ENCODE measurements at regions of chr6 and their contacts with region 1.

Region 1: DNA sequence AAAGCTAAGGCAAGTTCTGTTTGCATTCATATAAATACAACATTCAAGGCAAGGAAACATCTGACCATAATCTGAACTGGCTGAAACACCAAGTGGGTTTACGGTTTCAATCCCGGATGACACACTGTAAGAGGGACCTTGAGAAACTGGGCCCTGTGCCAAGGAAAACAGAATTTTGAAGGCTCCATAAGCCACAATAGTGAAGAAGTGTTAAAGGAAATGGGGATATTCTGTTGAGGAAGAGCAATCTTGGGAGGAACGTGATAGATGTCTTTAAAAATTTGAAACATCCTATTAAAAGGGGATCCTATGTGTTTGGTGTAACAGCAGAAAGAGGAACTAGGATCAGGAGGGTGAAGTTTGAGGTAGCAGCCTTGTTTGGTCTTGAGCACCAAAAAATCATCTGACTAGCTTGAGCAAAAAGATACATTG is 82.4 kb upstream of the TAB2 start:
- DNase-seq: no peak
- ATAC-seq: peak; percentile 81
- H3K4me3 Mint-ChIP-seq: peak overlapping the region; percentile 65
- H3K27ac Mint-ChIP-seq: peak overlapping the region; percentile 81
- H3K4me1 Mint-ChIP-seq: peaks cover 58% of the 10 kb centered on the region
- H3K27me3 Mint-ChIP-seq: no peaks in the 10 kb centered on the region
- CTCF ChIP-seq: no peak

Region 2: DNA sequence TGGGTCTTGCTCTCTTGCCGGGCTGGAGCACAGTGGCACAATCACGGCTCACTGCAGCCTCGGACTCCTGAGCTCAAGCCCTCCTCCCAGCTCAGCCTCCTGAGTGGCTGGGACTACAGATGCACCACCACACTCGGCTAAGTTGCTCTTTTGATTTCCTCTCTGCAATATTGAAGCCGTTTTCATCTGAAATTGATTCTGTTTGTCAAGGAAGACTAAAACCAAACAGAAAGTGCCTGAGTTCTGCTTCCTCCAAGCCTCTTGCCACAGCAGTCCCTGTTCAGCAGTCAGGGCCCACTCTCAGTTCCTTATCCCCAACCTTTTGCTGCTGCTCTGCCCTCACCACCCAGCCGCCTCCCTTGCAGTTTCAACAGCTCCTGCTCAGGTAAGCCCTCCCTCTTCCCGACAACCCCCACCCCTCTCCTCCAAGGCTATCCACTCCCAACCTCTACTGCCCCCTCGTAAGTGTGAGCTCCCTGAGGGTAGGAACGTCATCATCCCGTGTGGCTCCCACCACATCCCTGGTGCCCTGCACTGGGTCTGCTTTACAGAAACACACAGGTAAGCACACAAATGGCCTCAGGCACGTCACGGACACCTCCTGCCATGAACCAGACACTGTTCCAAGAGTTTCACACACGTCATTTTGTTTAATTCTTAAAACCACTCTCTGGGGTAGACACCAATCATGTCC is 11.7 kb after region 1 on chr6:
- CTCF ChIA-PET with region 1: interaction called, 4 read pairs
- POLR2A ChIA-PET with region 1: interaction called, 9 read pairs
- intact Hi-C with region 1: loop called (anchors 1 kb)
- DNase-seq: peak; percentile 46
- ATAC-seq: peak; percentile 97
- H3K4me3 Mint-ChIP-seq: peak overlapping the region; percentile 82
- H3K27ac Mint-ChIP-seq: peak overlapping the region; percentile 88
- H3K4me1 Mint-ChIP-seq: peaks cover 50% of the 10 kb centered on the region
- H3K27me3 Mint-ChIP-seq: no peaks in the 10 kb centered on the region
- CTCF ChIP-seq: no peak

Region 3: DNA sequence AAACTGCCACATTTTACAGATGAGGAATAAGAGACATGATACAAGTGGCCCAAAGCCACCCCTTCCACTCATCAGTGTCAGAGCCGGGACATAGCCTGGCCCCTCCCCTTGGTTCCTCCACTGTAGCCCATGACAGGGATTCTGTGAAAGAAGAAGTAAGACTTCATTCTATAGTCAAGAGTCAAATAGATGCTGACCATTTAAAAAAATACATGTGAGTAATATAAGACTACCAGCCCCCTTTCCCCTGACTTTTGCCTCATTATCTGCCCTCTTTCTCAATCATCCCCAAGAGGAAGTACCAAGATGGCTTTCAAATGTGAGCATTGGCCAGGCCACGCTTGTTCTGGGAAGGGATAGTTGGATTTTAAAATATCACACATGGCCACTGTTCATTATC is 24.6 kb after region 1 on chr6:
- CTCF ChIA-PET with region 1: interaction called, 3 read pairs
- POLR2A ChIA-PET with region 1: no interaction called
- intact Hi-C with region 1: loop called (anchors 2 kb)
- DNase-seq: no peak
- ATAC-seq: no peak
- H3K4me3 Mint-ChIP-seq: no peak overlapping the region
- H3K27ac Mint-ChIP-seq: no peak overlapping the region
- H3K4me1 Mint-ChIP-seq: peaks cover 9% of the 10 kb centered on the region
- H3K27me3 Mint-ChIP-seq: no peaks in the 10 kb centered on the region
- CTCF ChIP-seq: no peak